Psoas muscle (tissue), 8 donors: ENCODE measurements at regions of chr2 and their contacts with region 1.

Region 1: GRCh38 chr2:150895968-150896367 is 365.7 kb downstream of the RBM43 start:
- DNase-seq: no peak
- ATAC-seq: no peak
- H3K4me3 ChIP-seq: no peak overlapping the region
- H3K27ac ChIP-seq: no peak overlapping the region
- H3K4me1 ChIP-seq: no peaks in the 10 kb centered on the region
- H3K27me3 ChIP-seq: no peaks in the 10 kb centered on the region
- CTCF ChIP-seq: no peak

Region 2: GRCh38 chr2:150357770-150358467 is 538.0 kb before region 1 on chr2:
- intact Hi-C with region 1: no loop called
- DNase-seq: no peak
- ATAC-seq: no peak
- H3K4me3 ChIP-seq: no peak overlapping the region
- H3K27ac ChIP-seq: no peak overlapping the region
- H3K4me1 ChIP-seq: no peaks in the 10 kb centered on the region
- H3K27me3 ChIP-seq: no peaks in the 10 kb centered on the region
- CTCF ChIP-seq: no peak

Region 3: DNA sequence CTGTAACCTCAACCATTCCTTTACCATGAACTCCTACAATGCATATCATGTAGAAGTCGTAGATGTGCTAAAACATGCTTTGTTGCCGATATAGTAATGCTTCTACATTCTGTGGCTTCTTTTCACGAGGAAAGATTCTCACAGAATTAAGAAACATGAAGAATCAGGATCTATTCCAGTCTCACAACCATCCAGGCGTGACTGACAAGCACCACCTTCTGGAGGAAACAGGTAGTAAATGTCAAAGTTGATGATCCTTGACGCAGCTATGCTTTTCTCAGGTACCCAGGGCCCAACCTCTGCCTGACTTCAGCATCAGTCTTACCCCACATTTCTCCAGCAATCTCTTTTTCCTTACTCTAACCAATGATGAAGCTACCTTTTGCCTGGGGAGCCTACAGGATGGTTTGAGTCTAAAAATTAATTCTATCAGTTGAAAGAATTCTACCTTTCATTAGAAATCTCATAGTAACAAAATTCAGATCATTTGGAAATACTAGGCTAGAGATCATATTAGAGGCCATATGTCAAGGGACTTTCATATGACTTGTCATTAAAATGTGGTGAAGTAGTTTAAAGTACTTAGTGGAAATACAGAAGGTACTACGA is 285.2 kb before region 1 on chr2:
- intact Hi-C with region 1: loop called in 1 of 2 experiments (anchors 10 kb)
- DNase-seq: no peak
- ATAC-seq: no peak
- H3K4me3 ChIP-seq: no peak overlapping the region
- H3K27ac ChIP-seq: no peak overlapping the region
- H3K4me1 ChIP-seq: no peaks in the 10 kb centered on the region
- H3K27me3 ChIP-seq: no peaks in the 10 kb centered on the region
- CTCF ChIP-seq: peak; percentile 22

Region 4: GRCh38 chr2:151197184-151198108 is 301.5 kb after region 1 on chr2:
- intact Hi-C with region 1: no loop called
- DNase-seq: no peak
- ATAC-seq: no peak
- H3K4me3 ChIP-seq: no peak overlapping the region
- H3K27ac ChIP-seq: no peak overlapping the region
- H3K4me1 ChIP-seq: no peaks in the 10 kb centered on the region
- H3K27me3 ChIP-seq: no peaks in the 10 kb centered on the region
- CTCF ChIP-seq: no peak